ENCODE measurements at regions of chr6 and their contacts with region 1.

Region 1: DNA sequence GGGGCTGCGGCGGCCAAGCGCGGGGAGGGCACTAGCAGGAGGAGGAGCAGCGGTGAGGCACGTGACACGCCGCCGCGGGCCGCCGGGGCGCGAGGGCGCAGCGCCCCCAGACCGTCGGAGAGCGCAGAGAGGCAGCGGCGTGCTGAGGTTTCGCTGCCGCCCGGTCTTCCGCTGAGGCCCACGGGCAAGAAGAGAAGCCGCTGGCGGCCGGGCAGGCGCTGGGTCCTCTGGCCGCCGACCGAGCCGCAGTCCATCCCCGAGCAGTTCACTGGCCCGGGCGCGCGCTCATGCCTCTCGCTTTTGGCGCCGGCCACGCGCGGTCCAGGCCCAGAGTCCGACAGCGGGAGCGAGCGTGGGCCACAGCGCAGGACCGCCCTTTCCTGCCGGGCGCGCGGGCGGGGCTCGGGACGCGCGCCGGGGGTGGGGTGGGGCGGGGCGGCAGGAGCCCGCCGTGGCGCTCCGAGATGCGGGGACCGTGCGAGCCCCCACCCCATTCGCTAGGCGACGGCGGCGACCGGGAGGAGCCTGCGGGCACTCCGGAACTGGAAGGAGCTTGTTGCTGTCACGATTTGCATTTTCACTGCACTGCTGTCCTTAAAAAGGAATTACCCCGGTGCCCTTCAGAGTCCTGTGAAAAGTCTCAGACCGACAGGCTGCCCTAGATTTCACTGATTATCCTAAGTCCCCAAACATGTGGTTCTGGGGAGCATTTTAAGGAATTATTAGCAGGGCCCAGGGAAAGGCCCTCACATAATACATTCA is at the start of gene MCUR1:
- DNase-seq: peak; percentile 54 to 94 (median 73)
- ATAC-seq: peak; percentile 83
- H3K4me3 ChIP-seq: peak within 1 kb of the TSS; percentile 70
- H3K4me3 Mint-ChIP-seq: peak within 1 kb of the TSS; percentile 90
- H3K27ac ChIP-seq: peak within 1 kb of the TSS; percentile 72 to 80
- H3K27ac Mint-ChIP-seq: peak within 1 kb of the TSS; percentile 86
- H3K4me1 ChIP-seq: peaks cover 18% of the 10 kb centered on the region
- H3K4me1 Mint-ChIP-seq: peaks cover 37% of the 10 kb centered on the region
- H3K27me3 ChIP-seq: no peaks in the 10 kb centered on the region
- H3K27me3 Mint-ChIP-seq: no peaks in the 10 kb centered on the region
- CTCF ChIP-seq: peak; percentile 20
- total RNA-seq, gene MCUR1: 3.2 to 4.5 TPM

Region 2: DNA sequence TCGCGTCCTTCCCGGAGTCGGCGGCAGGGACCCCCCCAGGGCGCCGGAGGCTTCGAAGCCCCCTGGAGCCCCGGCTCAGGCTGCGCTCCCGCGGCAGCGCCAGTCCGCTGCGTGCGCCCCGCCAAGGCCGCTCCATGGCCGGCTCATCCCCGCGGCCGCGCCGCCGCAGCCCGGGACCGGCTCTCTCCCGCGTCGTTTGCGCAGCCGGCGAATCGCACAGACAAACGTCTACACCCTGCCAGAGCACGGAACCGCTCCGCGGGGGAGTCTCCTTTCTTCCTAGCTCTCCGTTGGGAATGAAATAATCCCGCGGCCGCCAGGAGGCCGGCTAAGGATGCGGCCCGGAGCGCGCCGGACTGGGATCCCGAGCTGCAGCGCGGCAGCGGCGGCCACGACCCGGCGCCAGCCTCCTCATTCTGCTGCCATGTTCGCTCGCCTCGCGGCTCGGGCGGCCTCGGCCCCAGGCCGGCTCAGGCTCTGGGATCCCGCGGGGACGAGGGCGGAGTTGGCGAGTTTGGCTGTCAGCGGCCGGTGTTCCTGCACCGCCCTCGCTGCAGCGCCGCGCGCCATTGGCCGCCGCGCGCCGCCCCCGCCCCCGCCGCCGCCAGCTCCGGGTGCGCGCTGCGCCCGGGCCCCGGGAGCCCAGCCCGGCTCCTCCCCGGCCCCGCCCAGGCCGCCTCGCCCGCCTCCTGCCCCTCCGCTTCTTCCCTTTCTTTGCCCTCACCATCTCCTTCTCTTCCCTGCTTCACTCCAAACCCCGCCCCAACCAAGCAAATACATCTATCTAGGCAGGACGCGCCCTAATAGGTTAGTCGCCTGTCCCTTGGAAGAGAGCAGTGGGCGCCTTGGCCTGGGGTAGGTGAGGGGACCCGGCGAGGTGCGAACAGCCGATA is 327.0 kb before region 1 on chr6 and contains the start of gene GFOD1:
- CTCF ChIA-PET with region 1: no interaction called
- POLR2A ChIA-PET with region 1: no interaction called
- intact Hi-C with region 1: loop called in 1 of 2 experiments (anchors 5 kb)
- DNase-seq: peak; percentile 28 to 86 (median 61)
- ATAC-seq: peak; percentile 76
- H3K4me3 ChIP-seq: peak within 1 kb of the TSS; percentile 67
- H3K4me3 Mint-ChIP-seq: peak within 1 kb of the TSS; percentile 94
- H3K27ac ChIP-seq: no peak within 1 kb of the TSS
- H3K27ac Mint-ChIP-seq: peak within 1 kb of the TSS; percentile 66
- H3K4me1 ChIP-seq: peaks cover 25% of the 10 kb centered on the region
- H3K4me1 Mint-ChIP-seq: peaks cover 29% of the 10 kb centered on the region
- H3K27me3 ChIP-seq: peaks cover 0 to 5% of the 10 kb centered on the region in 2 experiments
- H3K27me3 Mint-ChIP-seq: peaks cover 9% of the 10 kb centered on the region
- CTCF ChIP-seq: no peak
- total RNA-seq, gene GFOD1: 1.3 to 2.0 TPM

Region 3: GRCh38 chr6:13795041-13795750 is 19.2 kb before region 1 on chr6:
- CTCF ChIA-PET with region 1: interaction called, 4 read pairs
- POLR2A ChIA-PET with region 1: no interaction called
- intact Hi-C with region 1: loop called in 1 of 2 experiments (anchors 1 kb)
- DNase-seq: peak; percentile 73 to 92 (median 82)
- ATAC-seq: peak; percentile 98
- H3K4me3 ChIP-seq: no peak overlapping the region
- H3K4me3 Mint-ChIP-seq: no peak overlapping the region
- H3K27ac ChIP-seq: no peak overlapping the region
- H3K27ac Mint-ChIP-seq: no peak overlapping the region
- H3K4me1 ChIP-seq: no peaks in the 10 kb centered on the region
- H3K4me1 Mint-ChIP-seq: no peaks in the 10 kb centered on the region
- H3K27me3 ChIP-seq: no peaks in the 10 kb centered on the region
- H3K27me3 Mint-ChIP-seq: no peaks in the 10 kb centered on the region
- CTCF ChIP-seq: peak; percentile 90

Region 4: GRCh38 chr6:14117158-14118090 is 303.1 kb after region 1 on chr6 and contains the start of gene CD83:
- CTCF ChIA-PET with region 1: no interaction called
- POLR2A ChIA-PET with region 1: no interaction called
- intact Hi-C with region 1: loop called in 1 of 2 experiments (anchors 1 kb)
- DNase-seq: peak; percentile 65 to 97 (median 82)
- ATAC-seq: peak; percentile 96
- H3K4me3 ChIP-seq: peak within 1 kb of the TSS; percentile 98
- H3K4me3 Mint-ChIP-seq: peak within 1 kb of the TSS; percentile 96
- H3K27ac ChIP-seq: peak within 1 kb of the TSS; percentile 64 to 76
- H3K27ac Mint-ChIP-seq: peak within 1 kb of the TSS; percentile 94
- H3K4me1 ChIP-seq: peaks cover 19% of the 10 kb centered on the region
- H3K4me1 Mint-ChIP-seq: peaks cover 48% of the 10 kb centered on the region
- H3K27me3 ChIP-seq: no peaks in the 10 kb centered on the region
- H3K27me3 Mint-ChIP-seq: no peaks in the 10 kb centered on the region
- CTCF ChIP-seq: no peak
- total RNA-seq, gene CD83: 35.3 to 36.4 TPM

Region 5: GRCh38 chr6:15662326-15663129 is 1848.2 kb after region 1 on chr6 and contains the start of gene DTNBP1:
- CTCF ChIA-PET with region 1: no interaction called
- POLR2A ChIA-PET with region 1: no interaction called
- intact Hi-C with region 1: loop called in 1 of 2 experiments (anchors 5 kb)
- DNase-seq: peak; percentile 66 to 91 (median 80)
- ATAC-seq: peak; percentile 78
- H3K4me3 ChIP-seq: peak within 1 kb of the TSS; percentile 70
- H3K4me3 Mint-ChIP-seq: peak within 1 kb of the TSS; percentile 89
- H3K27ac ChIP-seq: peak within 1 kb of the TSS; percentile 45 to 48
- H3K27ac Mint-ChIP-seq: peak within 1 kb of the TSS; percentile 77
- H3K4me1 ChIP-seq: peaks cover 26% of the 10 kb centered on the region
- H3K4me1 Mint-ChIP-seq: peaks cover 41% of the 10 kb centered on the region
- H3K27me3 ChIP-seq: no peaks in the 10 kb centered on the region
- H3K27me3 Mint-ChIP-seq: no peaks in the 10 kb centered on the region
- CTCF ChIP-seq: no peak
- total RNA-seq, gene DTNBP1: 14.5 to 14.7 TPM